CD14-positive monocyte (primary cell): ENCODE measurements at regions of chr12 and their contacts with region 1.

Region 1: GRCh38 chr12:55194382-55194781 is 26.4 kb upstream of the OR10A7 start:
- DNase-seq: no peak
- H3K4me3 ChIP-seq: no peak overlapping the region
- H3K4me3 Mint-ChIP-seq: peak overlapping the region in 1 of 2 donors; percentile 26
- H3K27ac ChIP-seq: no peak overlapping the region
- H3K27ac Mint-ChIP-seq: no peak overlapping the region
- H3K4me1 ChIP-seq: no peaks in the 10 kb centered on the region
- H3K4me1 Mint-ChIP-seq: no peaks in the 10 kb centered on the region
- H3K27me3 ChIP-seq: peaks cover 0 to 2% of the 10 kb centered on the region in 2 donors
- H3K27me3 Mint-ChIP-seq: peaks cover 0 to 8% (median 0%) of the 10 kb centered on the region in 3 donors
- CTCF ChIP-seq: no peak

Region 2: DNA sequence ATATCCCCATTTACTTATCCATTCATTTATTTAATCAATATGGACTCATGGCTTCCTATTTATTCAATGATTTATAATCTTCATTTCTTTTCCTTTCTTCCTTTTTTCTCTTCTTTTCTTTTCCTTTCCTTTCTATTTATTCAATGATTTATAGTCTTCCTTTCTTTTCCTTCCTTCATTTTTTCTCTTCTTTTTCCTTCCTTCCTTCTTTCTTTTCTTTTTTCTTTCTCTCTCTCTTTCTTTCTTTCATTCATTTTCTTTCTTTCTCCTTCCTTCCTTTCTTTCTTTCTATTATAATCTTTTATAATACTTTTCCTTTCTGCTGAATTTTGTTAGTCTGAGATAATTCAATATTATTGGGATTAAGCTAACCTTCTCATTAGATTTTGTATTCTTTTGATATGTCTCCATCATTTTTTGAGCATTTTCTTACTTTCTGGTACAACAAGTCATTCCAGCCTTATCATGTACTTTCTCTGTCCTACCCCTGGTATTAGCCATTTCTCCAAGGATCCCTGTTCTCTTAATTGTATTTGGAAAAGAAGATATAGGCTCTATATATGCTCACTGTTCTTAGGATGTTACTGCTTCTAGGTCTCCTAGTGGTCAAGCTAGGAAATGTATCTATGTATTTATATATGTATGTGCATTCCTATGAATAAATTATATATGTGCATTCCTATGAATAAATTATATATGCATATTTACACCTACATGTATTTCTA is 571.8 kb before region 1 on chr12:
- intact Hi-C with region 1: no loop called
- DNase-seq: no peak
- H3K4me3 ChIP-seq: no peak overlapping the region
- H3K4me3 Mint-ChIP-seq: no peak overlapping the region
- H3K27ac ChIP-seq: no peak overlapping the region
- H3K27ac Mint-ChIP-seq: no peak overlapping the region
- H3K4me1 ChIP-seq: no peaks in the 10 kb centered on the region
- H3K4me1 Mint-ChIP-seq: peaks cover 2% of the 10 kb centered on the region
- H3K27me3 ChIP-seq: peaks cover 0 to 7% of the 10 kb centered on the region in 2 donors
- H3K27me3 Mint-ChIP-seq: peaks cover 8 to 12% (median 10%) of the 10 kb centered on the region in 3 donors
- CTCF ChIP-seq: peak; percentile 59

Region 3: DNA sequence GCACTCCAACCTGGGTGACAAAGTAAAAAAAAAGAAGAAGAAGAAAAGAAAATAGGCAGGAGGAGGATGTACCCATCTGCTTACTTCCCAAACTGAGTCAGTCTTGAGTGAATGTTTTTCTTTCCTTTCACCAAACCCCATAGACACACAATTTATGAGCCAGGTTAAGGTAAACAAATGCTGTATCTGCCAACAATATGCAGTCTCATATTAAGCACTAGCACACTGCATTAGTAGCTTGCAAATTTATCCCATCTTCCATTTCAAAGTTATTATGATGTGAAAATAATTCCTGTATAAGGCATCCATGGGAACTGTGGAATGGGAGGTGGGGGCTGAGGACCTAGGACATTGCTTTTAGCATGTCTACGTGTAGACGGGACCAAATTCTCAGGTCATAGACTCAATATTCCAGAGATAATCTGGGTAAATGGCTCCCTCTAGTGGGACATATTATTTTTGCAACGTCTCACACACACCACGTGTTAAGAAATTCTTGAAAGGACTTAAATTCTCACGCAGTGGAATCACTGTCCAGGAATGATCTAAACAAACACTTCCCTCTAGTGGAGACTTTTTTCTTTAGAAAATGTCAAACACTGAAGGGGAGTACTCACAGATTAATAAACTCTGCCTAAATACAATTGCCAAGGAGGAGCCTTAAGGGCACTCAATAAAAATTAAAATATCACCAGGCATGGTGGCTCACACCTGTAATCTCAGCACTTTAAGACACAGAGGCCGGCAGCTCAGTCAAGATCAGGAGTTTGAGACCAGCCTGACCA is 425.2 kb after region 1 on chr12:
- intact Hi-C with region 1: loop called (anchors 5 kb)
- DNase-seq: peak; percentile 76 to 91 (median 83)
- H3K4me3 ChIP-seq: no peak overlapping the region
- H3K4me3 Mint-ChIP-seq: no peak overlapping the region
- H3K27ac ChIP-seq: no peak overlapping the region
- H3K27ac Mint-ChIP-seq: peak overlapping the region in 2 of 7 donors; percentile 44 to 53
- H3K4me1 ChIP-seq: peaks cover 0 to 7% of the 10 kb centered on the region in 2 donors
- H3K4me1 Mint-ChIP-seq: peaks cover 7% of the 10 kb centered on the region
- H3K27me3 ChIP-seq: peaks cover 0 to 2% of the 10 kb centered on the region in 2 donors
- H3K27me3 Mint-ChIP-seq: peaks cover 1 to 13% (median 8%) of the 10 kb centered on the region in 3 donors
- CTCF ChIP-seq: peak; percentile 94